IMR-90 (cell line): ENCODE measurements at regions of chr7 and their contacts with region 1.

Region 1: GRCh38 chr7:25093268-25093826 is 31.7 kb downstream of the CYCS start:
- DNase-seq: peak; percentile 70
- ATAC-seq: peak; percentile 93
- H3K4me3 ChIP-seq: no peak overlapping the region
- H3K27ac ChIP-seq: no peak overlapping the region
- H3K4me1 ChIP-seq: no peaks in the 10 kb centered on the region
- H3K27me3 ChIP-seq: no peaks in the 10 kb centered on the region
- CTCF ChIP-seq: peak; percentile 88
- POLR2A ChIP-seq: no peak
- RAD21 ChIP-seq: peak; percentile 79

Region 2: DNA sequence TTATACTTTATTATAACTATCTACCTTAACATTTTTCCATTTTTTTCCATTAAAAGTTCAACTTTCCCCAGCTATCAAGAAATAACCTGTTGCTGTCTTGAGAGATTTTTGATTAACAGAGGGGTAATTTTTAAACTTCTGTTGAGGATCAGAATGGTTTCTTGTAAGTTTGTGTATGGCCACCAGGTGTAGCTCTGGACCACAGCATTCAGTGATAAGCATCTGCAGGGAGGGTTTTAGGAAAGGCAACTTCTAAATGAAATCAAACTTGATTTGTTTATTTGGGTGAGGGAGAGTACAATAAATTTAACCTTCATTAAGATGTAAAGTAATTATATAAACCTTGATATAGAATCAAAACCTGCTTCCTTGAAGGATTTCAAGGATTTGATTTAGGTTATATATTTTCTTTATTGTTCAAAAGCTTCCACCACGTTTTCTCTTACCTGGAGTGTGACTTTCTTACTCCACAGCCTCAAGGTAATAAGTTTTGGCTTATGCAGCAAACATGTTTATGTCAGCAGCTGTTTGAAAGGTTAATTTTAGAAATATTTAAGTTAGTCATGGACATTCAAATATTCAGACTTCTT is 1230.0 kb before region 1 on chr7:
- CTCF ChIA-PET with region 1: no interaction called
- POLR2A ChIA-PET with region 1: no interaction called
- dilution Hi-C with region 1: no loop called
- in situ Hi-C with region 1: no loop called
- intact Hi-C with region 1: loop called (anchors 10 kb)
- DNase-seq: peak; percentile 17
- ATAC-seq: no peak
- H3K4me3 ChIP-seq: no peak overlapping the region
- H3K27ac ChIP-seq: no peak overlapping the region
- H3K4me1 ChIP-seq: no peaks in the 10 kb centered on the region
- H3K27me3 ChIP-seq: no peaks in the 10 kb centered on the region
- CTCF ChIP-seq: peak; percentile 32; the same call in 1 of the 2 replicates
- POLR2A ChIP-seq: no peak
- RAD21 ChIP-seq: peak; percentile 52

Region 3: GRCh38 chr7:24812310-24812945 is 280.9 kb before region 1 on chr7:
- CTCF ChIA-PET with region 1: interaction called, 54 read pairs
- POLR2A ChIA-PET with region 1: no interaction called
- dilution Hi-C with region 1: loop called (anchors 25 kb)
- in situ Hi-C with region 1: loop called (anchors 5 kb)
- intact Hi-C with region 1: loop called (anchors 1 kb)
- DNase-seq: peak; percentile 36
- ATAC-seq: peak; percentile 95
- H3K4me3 ChIP-seq: no peak overlapping the region
- H3K27ac ChIP-seq: no peak overlapping the region
- H3K4me1 ChIP-seq: no peaks in the 10 kb centered on the region
- H3K27me3 ChIP-seq: no peaks in the 10 kb centered on the region
- CTCF ChIP-seq: peak; percentile 85
- POLR2A ChIP-seq: no peak
- RAD21 ChIP-seq: peak; percentile 77

Region 4: DNA sequence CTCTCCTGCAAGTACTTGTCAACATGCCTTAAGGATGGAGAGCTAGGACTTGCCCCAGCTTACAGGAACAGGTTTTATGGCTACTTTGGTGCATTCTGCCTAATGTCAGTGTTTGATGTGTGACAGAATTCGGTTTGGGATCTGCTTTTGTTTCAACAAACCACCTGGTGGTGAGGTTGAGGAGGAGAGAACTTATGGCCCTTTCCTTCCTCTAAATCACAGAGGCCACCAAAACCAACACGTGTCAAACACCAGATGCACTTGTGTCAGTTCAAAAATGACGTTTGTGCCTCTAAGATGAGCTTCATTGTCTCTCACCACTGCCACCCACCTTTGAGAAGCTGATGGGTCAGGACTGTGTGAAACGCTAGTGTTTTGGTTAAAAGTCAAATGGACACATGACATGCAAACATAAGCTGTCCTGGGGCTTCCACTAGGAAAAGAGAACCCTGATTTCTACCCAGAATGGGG is 197.3 kb before region 1 on chr7:
- CTCF ChIA-PET with region 1: no interaction called
- POLR2A ChIA-PET with region 1: no interaction called
- dilution Hi-C with region 1: no loop called
- in situ Hi-C with region 1: no loop called
- intact Hi-C with region 1: loop called (anchors 1 kb)
- DNase-seq: no peak
- ATAC-seq: no peak
- H3K4me3 ChIP-seq: no peak overlapping the region
- H3K27ac ChIP-seq: no peak overlapping the region
- H3K4me1 ChIP-seq: peaks cover 5% of the 10 kb centered on the region; the same call in 1 of the 2 replicates
- H3K27me3 ChIP-seq: no peaks in the 10 kb centered on the region
- CTCF ChIP-seq: no peak
- POLR2A ChIP-seq: no peak
- RAD21 ChIP-seq: no peak

Region 5: DNA sequence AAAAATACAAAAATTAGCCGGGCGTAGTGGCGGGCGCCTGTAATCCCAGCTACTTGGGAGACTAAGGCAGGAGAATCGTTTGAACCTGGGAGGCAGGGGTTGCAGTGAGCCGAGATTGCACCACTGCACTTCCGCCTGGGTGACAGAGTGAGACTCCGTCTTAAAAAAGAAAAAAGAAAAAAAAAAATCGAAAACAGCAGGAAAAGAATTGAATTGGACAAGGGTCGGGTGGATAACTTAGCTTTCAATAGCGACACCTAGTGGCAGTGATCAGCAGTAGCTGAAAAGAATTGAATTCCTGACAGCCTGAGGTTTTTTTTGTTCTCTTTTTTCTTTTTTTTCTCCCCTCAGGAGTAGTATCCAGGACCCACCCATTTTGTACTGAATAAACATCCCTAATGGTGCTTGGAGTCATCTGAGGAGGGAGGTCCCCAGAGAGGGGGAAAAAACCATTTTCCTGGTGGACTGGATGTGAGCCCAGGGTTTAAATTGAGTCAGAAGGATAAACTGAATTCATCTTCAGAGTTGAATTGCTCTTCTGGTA is 23.4 kb before region 1 on chr7:
- CTCF ChIA-PET with region 1: interaction called, 12 read pairs
- POLR2A ChIA-PET with region 1: no interaction called
- dilution Hi-C with region 1: no loop called
- in situ Hi-C with region 1: no loop called
- intact Hi-C with region 1: loop called (anchors 1 kb)
- DNase-seq: peak; percentile 88
- ATAC-seq: peak; percentile 52
- H3K4me3 ChIP-seq: no peak overlapping the region
- H3K27ac ChIP-seq: no peak overlapping the region
- H3K4me1 ChIP-seq: peaks cover 4% of the 10 kb centered on the region; the same call in 1 of the 2 replicates
- H3K27me3 ChIP-seq: no peaks in the 10 kb centered on the region
- CTCF ChIP-seq: peak; percentile 94
- POLR2A ChIP-seq: no peak
- RAD21 ChIP-seq: peak; percentile 92